Mammary epithelial cell (primary cell): ENCODE measurements at regions of chr4 and their contacts with region 1.

Region 1: DNA sequence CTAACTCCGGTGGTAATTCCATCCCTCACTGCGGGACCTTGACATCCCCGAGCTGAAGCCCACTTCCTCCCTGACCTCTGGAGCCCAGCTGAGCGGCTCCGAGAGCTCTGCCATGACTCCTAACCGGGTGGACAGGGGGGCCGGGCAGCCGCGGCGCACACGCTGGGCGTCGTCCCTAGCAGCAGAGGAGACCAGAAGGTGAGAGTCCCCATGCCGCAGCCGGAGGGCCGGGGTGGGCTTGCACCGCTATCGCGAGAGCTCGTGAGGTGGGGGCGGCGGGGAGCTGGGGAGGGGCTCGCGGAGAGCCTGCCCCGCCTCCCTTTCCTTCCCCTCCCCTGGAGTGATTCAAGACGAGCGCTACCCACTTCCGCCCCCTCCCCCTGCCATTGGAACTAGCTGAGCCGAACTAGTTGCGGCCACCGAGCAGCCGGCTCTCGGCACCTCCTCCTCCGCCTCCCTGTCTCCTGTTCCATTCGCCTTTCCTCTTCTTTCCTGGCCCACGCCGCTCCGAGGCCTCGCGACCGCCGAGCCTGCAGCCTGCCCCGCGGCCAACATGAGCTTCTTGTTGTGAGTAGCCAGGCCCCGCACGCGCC is at the start of gene MOB1B:
- DNase-seq: peak; percentile 79
- H3K4me3 ChIP-seq: peak within 1 kb of the TSS; percentile 72 to 92 (median 90)
- H3K27ac ChIP-seq: peak within 1 kb of the TSS; percentile 44
- H3K4me1 ChIP-seq: peaks cover 16% of the 10 kb centered on the region
- H3K27me3 ChIP-seq: no peaks in the 10 kb centered on the region
- CTCF ChIP-seq: peak; percentile 3 to 53
- total RNA-seq, gene MOB1B: 28.2 to 32.3 TPM

Region 2: DNA sequence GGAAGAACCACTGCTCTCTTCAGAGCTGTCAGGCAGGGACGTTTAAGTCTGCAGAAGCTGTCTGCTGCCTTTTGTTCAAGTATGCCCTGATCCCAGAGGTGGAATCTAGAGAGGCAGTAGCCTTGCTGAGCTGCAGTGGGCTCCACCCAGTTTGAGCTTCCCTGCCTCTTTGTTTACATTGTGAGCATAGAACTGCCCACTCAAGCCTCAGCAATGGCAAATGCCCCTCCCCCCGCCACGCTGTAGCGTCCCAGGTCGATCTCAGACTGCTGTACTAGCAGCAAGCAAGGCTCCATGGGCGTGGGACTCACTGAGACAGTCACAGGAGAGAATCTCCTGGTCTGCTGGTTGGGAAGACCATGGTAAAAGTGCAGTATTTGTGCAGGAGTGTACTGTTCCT is 464.9 kb before region 1 on chr4:
- CTCF ChIA-PET with region 1: no interaction called
- dilution Hi-C with region 1: no loop called
- in situ Hi-C with region 1: no loop called
- intact Hi-C with region 1: no loop called
- DNase-seq: no peak
- H3K4me3 ChIP-seq: no peak overlapping the region
- H3K27ac ChIP-seq: no peak overlapping the region
- H3K4me1 ChIP-seq: no peaks in the 10 kb centered on the region
- H3K27me3 ChIP-seq: no peaks in the 10 kb centered on the region
- CTCF ChIP-seq: no peak

Region 3: DNA sequence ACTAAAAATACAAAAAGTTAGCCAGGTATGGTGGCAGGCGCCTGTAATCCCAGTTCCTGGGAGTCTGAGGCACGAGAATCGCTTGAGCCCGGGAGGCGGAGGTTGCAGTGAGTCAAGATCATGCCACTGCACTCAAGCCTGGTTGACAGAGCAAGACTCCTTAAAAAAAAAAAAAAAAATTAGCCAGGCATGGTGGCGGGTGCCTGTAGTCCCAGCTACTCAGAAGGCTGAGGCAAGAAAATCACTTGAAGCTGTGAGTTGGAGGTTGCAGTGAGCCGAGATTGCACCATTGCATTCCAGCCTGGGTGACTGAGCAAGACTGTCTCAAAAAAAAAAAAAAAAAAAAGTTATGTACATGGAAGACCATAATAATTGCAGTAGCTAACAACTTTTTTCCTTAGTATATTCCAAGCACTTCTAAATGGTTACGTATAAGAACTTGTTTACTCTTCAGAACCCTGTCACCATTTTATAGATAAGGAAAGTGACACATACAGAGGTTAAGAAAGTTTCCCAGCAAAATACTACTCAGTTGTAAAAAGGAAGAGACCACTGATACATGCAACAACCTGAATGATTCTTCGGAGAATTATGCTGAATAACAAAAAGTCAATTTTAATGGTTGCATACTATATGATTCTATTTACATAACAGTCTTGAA is 155.8 kb before region 1 on chr4:
- CTCF ChIA-PET with region 1: no interaction called
- dilution Hi-C with region 1: no loop called
- in situ Hi-C with region 1: no loop called
- intact Hi-C with region 1: no loop called
- DNase-seq: no peak
- H3K4me3 ChIP-seq: no peak overlapping the region
- H3K27ac ChIP-seq: no peak overlapping the region
- H3K4me1 ChIP-seq: no peaks in the 10 kb centered on the region
- H3K27me3 ChIP-seq: no peaks in the 10 kb centered on the region
- CTCF ChIP-seq: no peak

Region 4: GRCh38 chr4:70839589-70840093 is 62.4 kb before region 1 on chr4 and contains the start of gene GRSF1:
- CTCF ChIA-PET with region 1: interaction called, 14 read pairs
- dilution Hi-C with region 1: no loop called
- in situ Hi-C with region 1: no loop called
- intact Hi-C with region 1: loop called (anchors 1 kb)
- DNase-seq: peak; percentile 87
- H3K4me3 ChIP-seq: peak within 1 kb of the TSS; percentile 74 to 93 (median 87)
- H3K27ac ChIP-seq: peak within 1 kb of the TSS; percentile 50
- H3K4me1 ChIP-seq: peaks cover 7% of the 10 kb centered on the region
- H3K27me3 ChIP-seq: no peaks in the 10 kb centered on the region
- CTCF ChIP-seq: peak in 1 of 2 donors; percentile 24
- total RNA-seq, gene GRSF1: 55.7 to 85.6 TPM

Region 5: DNA sequence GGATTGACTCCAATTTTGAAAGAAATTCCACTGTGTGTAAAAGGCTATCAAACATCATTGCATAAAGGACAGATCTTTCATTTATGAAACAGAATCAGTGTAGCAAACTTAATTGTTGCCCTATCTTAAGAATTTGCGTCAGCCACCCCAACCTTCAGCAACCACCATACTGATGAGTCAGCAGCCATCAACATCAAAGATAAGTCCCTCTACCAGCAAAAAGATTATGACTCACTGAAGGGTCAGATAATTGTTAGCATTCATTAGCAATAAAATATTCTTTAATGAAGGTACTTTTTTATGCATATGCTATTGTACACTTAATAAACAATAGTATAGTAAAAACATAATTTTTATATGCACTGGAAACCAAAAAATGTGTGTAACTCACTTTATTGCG is 46.6 kb before region 1 on chr4:
- CTCF ChIA-PET with region 1: no interaction called
- dilution Hi-C with region 1: loop called (anchors 10 kb)
- in situ Hi-C with region 1: no loop called
- intact Hi-C with region 1: no loop called
- DNase-seq: no peak
- H3K4me3 ChIP-seq: no peak overlapping the region
- H3K27ac ChIP-seq: no peak overlapping the region
- H3K4me1 ChIP-seq: no peaks in the 10 kb centered on the region
- H3K27me3 ChIP-seq: peaks cover 2% of the 10 kb centered on the region
- CTCF ChIP-seq: no peak

Region 6: GRCh38 chr4:70993181-70994068 is 91.3 kb after region 1 on chr4 and contains the start of gene DCK:
- CTCF ChIA-PET with region 1: no interaction called
- dilution Hi-C with region 1: no loop called
- in situ Hi-C with region 1: no loop called
- intact Hi-C with region 1: loop called (anchors 1 kb)
- DNase-seq: peak; percentile 91
- H3K4me3 ChIP-seq: peak within 1 kb of the TSS; percentile 81 to 95 (median 91)
- H3K27ac ChIP-seq: peak within 1 kb of the TSS; percentile 76
- H3K4me1 ChIP-seq: peaks cover 7% of the 10 kb centered on the region
- H3K27me3 ChIP-seq: no peaks in the 10 kb centered on the region
- CTCF ChIP-seq: no peak
- total RNA-seq, gene DCK: 10.0 to 16.0 TPM

Region 7: DNA sequence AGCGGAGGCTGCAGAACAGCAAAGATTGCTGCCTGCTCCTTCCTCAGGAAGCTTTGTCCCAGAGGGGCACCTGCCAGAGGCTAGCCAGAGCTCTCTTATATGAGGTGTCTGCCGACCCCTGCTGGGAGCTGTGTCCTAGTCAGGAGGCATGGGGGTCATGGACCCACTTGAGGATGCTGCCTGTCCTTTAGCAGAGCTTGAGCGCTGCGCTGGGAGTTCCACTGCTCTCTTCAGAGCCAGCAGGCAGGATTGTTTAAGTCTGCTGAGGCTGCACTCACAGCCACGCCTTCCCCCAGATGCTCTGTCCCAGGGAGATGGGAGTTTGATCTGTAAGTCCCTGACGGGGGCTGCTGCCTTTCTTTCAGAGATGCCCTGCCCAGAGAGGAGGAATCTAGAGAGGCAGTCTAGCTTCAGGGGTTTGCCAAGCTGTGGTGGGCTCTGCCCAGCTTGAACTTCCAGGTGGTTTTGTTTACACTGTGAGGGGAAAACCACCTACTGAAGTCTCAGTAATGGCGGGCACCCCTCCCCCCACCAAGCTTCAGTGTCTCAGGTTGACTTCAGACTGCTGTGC is 102.3 kb after region 1 on chr4:
- CTCF ChIA-PET with region 1: no interaction called
- dilution Hi-C with region 1: loop called (anchors 5 kb)
- in situ Hi-C with region 1: no loop called
- intact Hi-C with region 1: loop called (anchors 1 kb)
- DNase-seq: no peak
- H3K4me3 ChIP-seq: no peak overlapping the region
- H3K27ac ChIP-seq: no peak overlapping the region
- H3K4me1 ChIP-seq: no peaks in the 10 kb centered on the region
- H3K27me3 ChIP-seq: no peaks in the 10 kb centered on the region
- CTCF ChIP-seq: no peak

Region 8: DNA sequence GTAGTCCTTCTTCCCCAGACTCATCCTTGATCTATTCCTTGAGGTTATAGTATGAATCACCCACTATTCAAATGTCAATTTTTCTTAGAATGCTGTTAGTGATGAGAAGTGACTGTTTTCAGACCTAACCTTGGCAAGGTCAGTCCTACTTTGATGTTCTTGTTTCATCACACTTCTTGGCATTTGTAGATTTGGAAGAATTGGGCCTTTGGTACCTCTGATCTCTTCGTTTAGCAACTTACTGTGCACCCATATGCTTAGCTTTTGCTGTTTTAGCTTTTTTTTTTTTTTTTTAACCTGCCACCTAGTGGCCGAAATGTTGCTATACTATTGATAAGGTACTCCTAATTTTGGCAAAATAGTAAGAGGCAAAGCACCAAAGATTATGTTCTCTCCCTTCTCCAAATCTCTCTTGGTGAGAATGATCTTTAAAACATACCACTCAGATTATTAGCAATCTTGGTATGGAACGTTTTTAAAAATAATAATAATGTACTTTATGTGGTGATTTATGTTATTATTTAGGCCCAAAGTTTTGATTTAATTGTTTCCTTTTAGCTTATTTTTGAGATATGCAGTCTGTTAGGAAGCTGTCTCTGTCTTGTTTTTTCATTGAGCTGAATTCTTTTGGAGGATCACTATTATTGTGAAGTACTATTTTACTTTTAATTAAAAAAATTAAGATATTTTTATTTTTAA is 108.0 kb after region 1 on chr4:
- CTCF ChIA-PET with region 1: no interaction called
- dilution Hi-C with region 1: no loop called
- in situ Hi-C with region 1: no loop called
- intact Hi-C with region 1: loop called (anchors 1 kb)
- DNase-seq: peak; percentile 41
- H3K4me3 ChIP-seq: no peak overlapping the region
- H3K27ac ChIP-seq: no peak overlapping the region
- H3K4me1 ChIP-seq: peaks cover 3% of the 10 kb centered on the region
- H3K27me3 ChIP-seq: no peaks in the 10 kb centered on the region
- CTCF ChIP-seq: peak; percentile 63 to 64